HCT116 (cell line): ENCODE measurements at regions of chr16 and their contacts with region 1.

Region 1: GRCh38 chr16:54957403-54958171 is 26.9 kb downstream of the IRX5 start:
- DNase-seq: peak; percentile 39
- ATAC-seq: peak; percentile 46; the same call in 1 of the 2 replicates
- H3K4me3 ChIP-seq: no peak overlapping the region
- H3K27ac ChIP-seq: no peak overlapping the region
- H3K4me1 ChIP-seq: no peaks in the 10 kb centered on the region
- H3K27me3 ChIP-seq: no peaks in the 10 kb centered on the region; the same call in 1 of the 2 replicates
- CTCF ChIP-seq: peak; percentile 40 to 61 (median 60); a peak in 5 of 6 replicates
- POLR2A ChIP-seq: no peak
- RAD21 ChIP-seq: peak; percentile 67

Region 2: GRCh38 chr16:53549970-53550690 is 1407.5 kb before region 1 on chr16:
- CTCF ChIA-PET with region 1: interaction called, 9 read pairs
- POLR2A ChIA-PET with region 1: no interaction called
- RAD21 ChIA-PET with region 1: no interaction called
- intact Hi-C with region 1: loop called (anchors 10 kb)
- DNase-seq: peak; percentile 46
- ATAC-seq: peak; percentile 86
- H3K4me3 ChIP-seq: no peak overlapping the region
- H3K27ac ChIP-seq: no peak overlapping the region
- H3K4me1 ChIP-seq: peaks cover 0 to 9% of the 10 kb centered on the region in 2 experiments; a peak in 2 of 4 replicates
- H3K27me3 ChIP-seq: no peaks in the 10 kb centered on the region
- CTCF ChIP-seq: peak; percentile 59 to 82 (median 61); a peak in 5 of 6 replicates
- POLR2A ChIP-seq: no peak
- RAD21 ChIP-seq: peak; percentile 89

Region 3: GRCh38 chr16:53892155-53892554 is 1065.4 kb before region 1 on chr16:
- CTCF ChIA-PET with region 1: no interaction called
- POLR2A ChIA-PET with region 1: no interaction called
- RAD21 ChIA-PET with region 1: no interaction called
- intact Hi-C with region 1: loop called (anchors 10 kb)
- DNase-seq: peak; percentile 22
- ATAC-seq: peak; percentile 81
- H3K4me3 ChIP-seq: no peak overlapping the region
- H3K27ac ChIP-seq: no peak overlapping the region
- H3K4me1 ChIP-seq: no peaks in the 10 kb centered on the region
- H3K27me3 ChIP-seq: no peaks in the 10 kb centered on the region
- CTCF ChIP-seq: peak; percentile 21 to 79 (median 72); a peak in 5 of 6 replicates
- POLR2A ChIP-seq: no peak
- RAD21 ChIP-seq: peak; percentile 71

Region 4: DNA sequence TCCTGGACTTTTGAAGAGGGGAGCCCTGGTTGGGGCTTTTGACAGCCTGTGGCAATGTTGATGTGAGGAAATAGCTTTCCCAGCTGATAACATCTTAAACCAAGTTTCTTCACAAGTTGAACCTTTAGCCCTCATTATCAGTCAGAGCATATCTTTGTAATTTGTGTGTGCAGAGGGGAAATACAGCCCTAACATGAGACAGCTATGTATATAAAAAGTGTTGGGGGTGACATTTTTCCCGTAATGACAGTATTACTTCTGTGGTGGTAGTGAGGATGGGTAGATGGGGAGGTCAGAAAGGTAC is 1032.5 kb before region 1 on chr16:
- CTCF ChIA-PET with region 1: interaction called, 10 read pairs
- POLR2A ChIA-PET with region 1: no interaction called
- RAD21 ChIA-PET with region 1: no interaction called
- intact Hi-C with region 1: no loop called
- DNase-seq: no peak
- ATAC-seq: no peak
- H3K4me3 ChIP-seq: no peak overlapping the region
- H3K27ac ChIP-seq: no peak overlapping the region
- H3K4me1 ChIP-seq: no peaks in the 10 kb centered on the region
- H3K27me3 ChIP-seq: no peaks in the 10 kb centered on the region
- CTCF ChIP-seq: no peak
- POLR2A ChIP-seq: no peak
- RAD21 ChIP-seq: no peak

Region 5: GRCh38 chr16:54286090-54286993 is 671.2 kb before region 1 on chr16 and contains the start of gene IRX3:
- CTCF ChIA-PET with region 1: interaction called, 4 read pairs
- POLR2A ChIA-PET with region 1: no interaction called
- RAD21 ChIA-PET with region 1: no interaction called
- intact Hi-C with region 1: loop called (anchors 10 kb)
- DNase-seq: peak; percentile 66
- ATAC-seq: peak; percentile 90
- H3K4me3 ChIP-seq: peak within 1 kb of the TSS; percentile 56 to 71
- H3K27ac ChIP-seq: peak within 1 kb of the TSS; percentile 60; the same call in 1 of the 2 replicates
- H3K4me1 ChIP-seq: peaks cover 7 to 22% of the 10 kb centered on the region in 2 experiments
- H3K27me3 ChIP-seq: no peaks in the 10 kb centered on the region
- CTCF ChIP-seq: no peak
- POLR2A ChIP-seq: no peak
- RAD21 ChIP-seq: no peak
- total RNA-seq, gene IRX3: 2.0 TPM

Region 6: GRCh38 chr16:54633943-54634362 is 323.6 kb before region 1 on chr16:
- CTCF ChIA-PET with region 1: no interaction called
- POLR2A ChIA-PET with region 1: no interaction called
- RAD21 ChIA-PET with region 1: no interaction called
- intact Hi-C with region 1: loop called (anchors 5 kb)
- DNase-seq: peak; percentile 39
- ATAC-seq: peak; percentile 88
- H3K4me3 ChIP-seq: peak overlapping the region; percentile 11 to 24; a peak in 1 of 4 replicates
- H3K27ac ChIP-seq: no peak overlapping the region
- H3K4me1 ChIP-seq: peaks cover 0 to 4% of the 10 kb centered on the region in 2 experiments; a peak in 1 of 4 replicates
- H3K27me3 ChIP-seq: 0 out of 2 replicates have a peak, but pooled peaks cover 4% of the 10 kb centered on the region
- CTCF ChIP-seq: peak; percentile 54 to 83 (median 81); a peak in 5 of 6 replicates
- POLR2A ChIP-seq: no peak
- RAD21 ChIP-seq: peak; percentile 70

Region 7: DNA sequence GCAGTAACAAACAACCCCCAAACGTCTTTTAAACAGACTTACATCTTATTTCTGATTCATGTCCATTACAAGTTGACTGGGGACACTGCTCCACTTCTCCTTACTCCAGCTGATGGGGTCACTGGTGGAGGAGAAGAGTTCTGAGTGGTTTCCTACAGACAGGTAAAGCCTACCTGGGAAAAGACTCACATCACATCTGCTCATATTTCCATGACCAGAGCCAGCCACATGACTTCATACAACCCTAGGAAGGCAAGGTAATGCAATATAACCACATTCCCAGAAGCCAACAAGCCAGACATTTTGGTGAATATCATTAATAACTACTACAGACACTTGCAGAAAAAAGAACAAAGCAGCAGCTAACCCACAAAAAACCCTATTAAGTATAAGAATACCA is 275.9 kb after region 1 on chr16:
- CTCF ChIA-PET with region 1: no interaction called
- POLR2A ChIA-PET with region 1: no interaction called
- RAD21 ChIA-PET with region 1: no interaction called
- intact Hi-C with region 1: no loop called
- DNase-seq: no peak
- ATAC-seq: no peak
- H3K4me3 ChIP-seq: no peak overlapping the region
- H3K27ac ChIP-seq: no peak overlapping the region
- H3K4me1 ChIP-seq: no peaks in the 10 kb centered on the region
- H3K27me3 ChIP-seq: peaks cover 12% of the 10 kb centered on the region
- CTCF ChIP-seq: no peak
- POLR2A ChIP-seq: no peak
- RAD21 ChIP-seq: no peak